Cardiac septum (tissue), 1 donor: ENCODE measurements at regions of chr15 and their contacts with region 1.

Region 1: GRCh38 chr15:98904544-98904943 is 103.0 kb downstream of the PGPEP1L start:
- DNase-seq: no peak

Region 2: DNA sequence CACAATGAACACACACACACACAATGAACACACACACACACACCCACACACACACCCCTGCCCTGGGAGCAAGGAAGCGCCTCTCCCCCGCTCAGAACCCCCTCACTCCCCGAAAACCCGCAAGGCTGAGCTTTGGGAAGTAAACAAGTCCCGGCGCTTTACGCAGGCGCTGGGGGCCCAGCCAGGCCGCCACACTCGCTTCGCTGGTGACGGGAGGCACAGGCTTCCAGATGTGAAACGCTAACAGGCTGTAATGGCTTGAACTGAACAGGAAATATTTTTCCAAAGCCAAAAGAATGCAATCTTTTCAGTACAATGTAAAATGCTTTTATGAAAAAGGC is 378.9 kb before region 1 on chr15:
- intact Hi-C with region 1: loop called (anchors 10 kb)
- DNase-seq: no peak